ENCODE measurements at regions of chr4 and their contacts with region 1.

Region 1: GRCh38 chr4:7939377-7940108 is at the start of gene AFAP1:
- DNase-seq: peak; percentile 88
- H3K4me3 Mint-ChIP-seq: peak within 1 kb of the TSS; percentile 82
- H3K27ac Mint-ChIP-seq: peak within 1 kb of the TSS; percentile 91
- H3K4me1 Mint-ChIP-seq: peaks cover 28% of the 10 kb centered on the region
- H3K27me3 Mint-ChIP-seq: no peaks in the 10 kb centered on the region
- CTCF ChIP-seq: no peak
- total RNA-seq, gene AFAP1: 37.9 and 40.1 TPM in 2 replicates

Region 2: DNA sequence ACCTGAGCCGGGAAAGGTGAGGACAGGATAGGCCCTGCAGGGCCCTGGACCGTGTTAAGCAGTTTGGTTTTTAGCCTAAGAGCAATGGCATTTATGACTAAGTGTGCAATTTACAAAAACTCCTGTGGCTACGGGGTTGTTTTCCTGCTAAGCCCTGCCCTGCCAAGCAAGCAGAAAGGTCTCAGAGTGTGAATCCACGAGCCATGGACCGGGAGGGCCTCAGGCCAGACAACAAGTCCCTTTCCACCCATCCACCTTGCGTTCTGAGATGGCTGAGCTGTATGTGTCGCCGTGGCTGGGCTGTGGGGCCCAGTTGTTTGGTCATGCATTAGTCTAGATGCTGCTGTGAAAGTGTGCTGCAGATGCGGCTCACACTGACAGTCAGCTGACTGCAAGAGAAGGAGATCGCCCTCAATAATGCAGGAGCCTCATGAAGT is 34.0 kb after region 1 on chr4:
- CTCF ChIA-PET with region 1: interaction called, 5 read pairs
- intact Hi-C with region 1: loop called (anchors 5 kb)
- DNase-seq: no peak
- H3K4me3 Mint-ChIP-seq: no peak overlapping the region
- H3K27ac Mint-ChIP-seq: peak overlapping the region; percentile 92
- H3K4me1 Mint-ChIP-seq: peaks cover 57% of the 10 kb centered on the region
- H3K27me3 Mint-ChIP-seq: no peaks in the 10 kb centered on the region
- CTCF ChIP-seq: no peak

Region 3: GRCh38 chr4:8000721-8001491 is 61.4 kb after region 1 on chr4:
- CTCF ChIA-PET with region 1: no interaction called
- intact Hi-C with region 1: no loop called
- DNase-seq: no peak
- H3K4me3 Mint-ChIP-seq: no peak overlapping the region
- H3K27ac Mint-ChIP-seq: no peak overlapping the region
- H3K4me1 Mint-ChIP-seq: no peaks in the 10 kb centered on the region
- H3K27me3 Mint-ChIP-seq: peaks cover 45% of the 10 kb centered on the region
- CTCF ChIP-seq: no peak

Region 4: GRCh38 chr4:8090312-8090711 is 150.8 kb after region 1 on chr4:
- CTCF ChIA-PET with region 1: no interaction called
- intact Hi-C with region 1: no loop called
- DNase-seq: no peak
- H3K4me3 Mint-ChIP-seq: no peak overlapping the region
- H3K27ac Mint-ChIP-seq: no peak overlapping the region
- H3K4me1 Mint-ChIP-seq: no peaks in the 10 kb centered on the region
- H3K27me3 Mint-ChIP-seq: peaks cover 16% of the 10 kb centered on the region
- CTCF ChIP-seq: no peak

Measured in Calu3 (cell line).